Calu3 (cell line): ENCODE measurements at regions of chr13 and their contacts with region 1.

Region 1: GRCh38 chr13:99916366-99917103 is 55.0 kb downstream of the ZIC5 start:
- DNase-seq: peak; percentile 3
- H3K4me3 Mint-ChIP-seq: no peak overlapping the region
- H3K27ac Mint-ChIP-seq: no peak overlapping the region
- H3K4me1 Mint-ChIP-seq: no peaks in the 10 kb centered on the region
- H3K27me3 Mint-ChIP-seq: peaks cover 2% of the 10 kb centered on the region
- CTCF ChIP-seq: peak; percentile 35

Region 2: DNA sequence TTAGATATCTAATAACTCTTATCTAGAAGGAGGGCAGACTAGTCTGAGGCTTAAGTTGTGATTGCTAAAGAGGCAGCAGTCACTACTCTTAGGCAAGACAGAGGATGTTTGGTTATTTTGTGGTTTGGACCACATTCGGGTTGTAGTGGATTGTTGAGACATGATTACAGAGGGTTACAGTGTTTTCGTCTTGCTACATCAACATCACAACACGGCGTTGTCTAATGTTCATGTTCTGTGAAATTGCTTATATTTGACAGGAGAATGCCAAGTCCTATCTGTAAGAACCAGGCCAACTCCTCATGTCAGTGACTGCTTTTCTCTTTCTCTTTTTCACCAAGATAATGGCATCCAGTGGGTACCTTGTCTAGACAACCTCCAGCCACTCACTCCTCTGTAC is 432.1 kb before region 1 on chr13:
- CTCF ChIA-PET with region 1: no interaction called
- intact Hi-C with region 1: no loop called
- DNase-seq: no peak
- H3K4me3 Mint-ChIP-seq: no peak overlapping the region
- H3K27ac Mint-ChIP-seq: no peak overlapping the region
- H3K4me1 Mint-ChIP-seq: no peaks in the 10 kb centered on the region
- H3K27me3 Mint-ChIP-seq: no peaks in the 10 kb centered on the region
- CTCF ChIP-seq: no peak

Region 3: DNA sequence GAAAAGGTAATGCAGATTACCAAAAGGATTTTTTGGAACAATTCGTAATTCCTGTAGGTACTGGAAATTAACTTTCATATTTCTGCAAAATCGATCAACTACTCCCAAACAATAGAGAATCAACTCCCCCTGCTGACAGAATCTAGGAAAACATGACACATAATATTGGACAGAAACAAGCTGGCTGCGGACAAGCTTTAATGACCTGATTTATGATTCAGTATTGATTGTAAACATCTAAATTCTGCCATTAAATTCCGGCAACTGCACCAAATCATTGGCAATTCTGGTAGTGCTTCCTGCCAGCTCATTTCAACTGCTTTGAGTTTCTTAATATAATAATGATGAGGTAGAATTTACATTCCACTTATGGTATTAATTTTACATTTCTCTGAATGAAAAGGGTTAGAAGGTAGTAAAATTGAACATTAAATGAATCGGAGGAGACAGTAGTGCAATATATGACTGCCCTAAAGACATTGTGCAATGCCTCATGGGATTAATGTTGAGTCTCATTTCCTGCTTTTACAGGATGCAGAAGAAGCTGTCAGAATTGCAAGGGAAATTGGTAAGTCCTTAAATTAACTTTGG is 318.9 kb after region 1 on chr13:
- CTCF ChIA-PET with region 1: interaction called, 3 read pairs
- intact Hi-C with region 1: loop called (anchors 2 kb)
- DNase-seq: peak; percentile 15
- H3K4me3 Mint-ChIP-seq: no peak overlapping the region
- H3K27ac Mint-ChIP-seq: no peak overlapping the region
- H3K4me1 Mint-ChIP-seq: no peaks in the 10 kb centered on the region
- H3K27me3 Mint-ChIP-seq: no peaks in the 10 kb centered on the region
- CTCF ChIP-seq: no peak